ENCODE measurements at regions of chr11 and their contacts with region 1.

Region 1: GRCh38 chr11:14907411-14908213 is 15.6 kb upstream of the CYP2R1 start:
- DNase-seq: peak; percentile 89
- ATAC-seq: peak; percentile 68
- H3K4me3 Mint-ChIP-seq: no peak overlapping the region
- H3K27ac Mint-ChIP-seq: no peak overlapping the region
- H3K4me1 Mint-ChIP-seq: peaks cover 54% of the 10 kb centered on the region
- H3K27me3 Mint-ChIP-seq: no peaks in the 10 kb centered on the region

Region 2: GRCh38 chr11:14258221-14258935 is 649.2 kb before region 1 on chr11:
- CTCF ChIA-PET with region 1: no interaction called
- POLR2A ChIA-PET with region 1: no interaction called
- DNase-seq: no peak
- ATAC-seq: no peak
- H3K4me3 Mint-ChIP-seq: no peak overlapping the region
- H3K27ac Mint-ChIP-seq: no peak overlapping the region
- H3K4me1 Mint-ChIP-seq: no peaks in the 10 kb centered on the region
- H3K27me3 Mint-ChIP-seq: no peaks in the 10 kb centered on the region

Region 3: DNA sequence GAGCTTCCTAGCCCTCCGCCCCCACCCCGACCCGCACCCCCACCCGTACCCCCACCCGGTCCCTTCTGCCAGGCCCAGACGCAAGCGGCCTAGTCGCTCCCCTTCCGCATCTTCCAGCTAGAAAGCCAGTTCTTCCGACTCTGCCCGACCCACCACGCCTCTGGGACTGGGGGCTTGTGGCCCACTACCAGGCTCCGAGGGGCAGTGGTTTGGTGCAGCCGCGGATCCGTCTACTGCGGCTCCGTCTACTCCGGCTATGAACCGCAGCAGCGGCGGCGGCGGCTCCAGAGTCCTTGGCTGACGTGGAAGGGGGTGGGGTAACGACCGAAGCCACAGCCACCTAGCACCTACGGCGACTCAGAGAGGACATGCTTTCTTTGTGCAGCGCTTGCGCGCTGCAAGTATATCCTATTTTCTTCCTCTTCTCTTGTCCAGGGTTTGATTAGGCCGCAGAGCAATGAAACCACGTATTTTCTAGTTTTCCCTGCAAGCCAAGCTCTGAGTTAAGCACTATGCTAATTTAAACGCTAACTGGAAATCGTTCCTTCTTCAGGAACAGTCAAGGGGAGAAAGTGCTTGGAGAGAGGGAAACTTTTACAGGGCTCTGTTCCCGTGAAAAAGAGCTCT is 407.9 kb before region 1 on chr11 and contains the start of gene COPB1:
- CTCF ChIA-PET with region 1: interaction called, 21 read pairs
- POLR2A ChIA-PET with region 1: interaction called, 5 read pairs
- DNase-seq: peak; percentile 96
- ATAC-seq: peak; percentile 93
- H3K4me3 Mint-ChIP-seq: peak within 1 kb of the TSS; percentile 99
- H3K27ac Mint-ChIP-seq: peak within 1 kb of the TSS; percentile 96
- H3K4me1 Mint-ChIP-seq: peaks cover 47% of the 10 kb centered on the region
- H3K27me3 Mint-ChIP-seq: no peaks in the 10 kb centered on the region
- total RNA-seq, gene COPB1: 77.8 to 79.1 TPM

Region 4: DNA sequence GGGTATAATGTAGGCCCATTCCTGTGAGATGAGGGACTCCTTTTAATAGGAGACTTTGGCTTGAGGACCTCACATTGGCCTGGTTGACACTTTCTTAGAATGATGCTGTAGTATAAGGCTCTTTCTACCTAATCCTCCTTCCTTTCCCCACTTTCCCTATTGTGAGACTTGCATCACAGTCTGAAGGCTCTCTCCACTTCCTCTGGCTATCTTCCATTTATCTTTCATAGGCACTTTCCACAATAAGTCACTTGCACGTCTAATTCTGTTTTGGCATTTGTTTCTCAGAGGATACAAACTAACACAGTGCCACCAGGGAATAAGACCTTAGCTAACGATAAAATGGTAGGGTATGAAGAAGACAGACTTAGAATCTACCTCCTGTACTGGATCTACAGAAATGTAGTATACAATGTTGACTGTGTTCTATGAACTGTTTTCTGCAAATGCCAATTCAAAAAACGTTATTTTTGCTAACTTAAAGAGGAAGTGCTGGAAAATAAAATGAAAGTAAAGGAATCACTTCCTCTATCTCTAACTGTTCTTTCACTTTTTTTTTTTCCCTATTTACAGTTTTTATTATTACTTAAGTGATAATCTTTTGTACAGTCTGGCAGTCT is 281.9 kb before region 1 on chr11:
- CTCF ChIA-PET with region 1: interaction called, 31 read pairs
- POLR2A ChIA-PET with region 1: no interaction called
- DNase-seq: no peak
- ATAC-seq: no peak
- H3K4me3 Mint-ChIP-seq: no peak overlapping the region
- H3K27ac Mint-ChIP-seq: peak overlapping the region; percentile 21
- H3K4me1 Mint-ChIP-seq: peaks cover 43% of the 10 kb centered on the region
- H3K27me3 Mint-ChIP-seq: no peaks in the 10 kb centered on the region

Region 5: GRCh38 chr11:14764579-14765527 is 142.8 kb before region 1 on chr11:
- CTCF ChIA-PET with region 1: interaction called, 41 read pairs
- POLR2A ChIA-PET with region 1: no interaction called
- DNase-seq: peak; percentile 77
- ATAC-seq: peak; percentile 79
- H3K4me3 Mint-ChIP-seq: no peak overlapping the region
- H3K27ac Mint-ChIP-seq: no peak overlapping the region
- H3K4me1 Mint-ChIP-seq: peaks cover 46% of the 10 kb centered on the region
- H3K27me3 Mint-ChIP-seq: no peaks in the 10 kb centered on the region

Region 6: DNA sequence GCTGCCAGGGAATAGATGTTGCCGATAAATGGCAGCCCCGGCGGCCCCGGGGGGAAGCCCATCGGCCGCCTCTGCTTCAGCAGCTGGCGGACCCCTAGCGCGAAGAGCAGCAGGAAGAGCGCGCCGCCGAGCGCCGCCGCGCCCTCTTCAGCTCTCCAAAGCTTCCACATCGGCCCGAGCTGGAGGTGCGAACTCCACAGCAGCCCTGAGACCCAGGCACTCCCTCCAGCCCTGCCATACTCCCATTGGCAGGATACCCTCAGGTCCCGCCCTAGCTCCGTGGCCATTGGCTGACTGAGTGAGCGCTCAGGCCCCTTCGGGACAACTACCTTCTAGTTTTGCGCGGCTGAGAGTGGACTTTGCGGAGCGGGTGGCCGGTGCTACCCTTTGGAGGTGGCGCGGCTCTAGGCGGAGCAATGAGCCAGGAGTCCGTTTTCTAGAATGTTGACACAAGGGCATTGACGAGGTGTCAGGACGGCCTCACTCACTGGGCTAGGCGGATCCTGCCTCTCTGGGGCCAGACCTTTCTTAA is 15.5 kb before region 1 on chr11 and contains the start of gene CYP2R1:
- CTCF ChIA-PET with region 1: interaction called, 111 read pairs
- POLR2A ChIA-PET with region 1: interaction called, 10 read pairs
- DNase-seq: peak; percentile 95
- ATAC-seq: peak; percentile 95
- H3K4me3 Mint-ChIP-seq: peak within 1 kb of the TSS; percentile 82
- H3K27ac Mint-ChIP-seq: peak within 1 kb of the TSS; percentile 90
- H3K4me1 Mint-ChIP-seq: peaks cover 55% of the 10 kb centered on the region
- H3K27me3 Mint-ChIP-seq: no peaks in the 10 kb centered on the region
- total RNA-seq, gene CYP2R1: 14.4 to 18.8 TPM

Region 7: GRCh38 chr11:15006139-15006759 is 98.6 kb after region 1 on chr11:
- CTCF ChIA-PET with region 1: interaction called, 172 read pairs
- POLR2A ChIA-PET with region 1: no interaction called
- DNase-seq: no peak
- ATAC-seq: peak; percentile 65
- H3K4me3 Mint-ChIP-seq: no peak overlapping the region
- H3K27ac Mint-ChIP-seq: no peak overlapping the region
- H3K4me1 Mint-ChIP-seq: no peaks in the 10 kb centered on the region
- H3K27me3 Mint-ChIP-seq: peaks cover 35% of the 10 kb centered on the region

Region 8: DNA sequence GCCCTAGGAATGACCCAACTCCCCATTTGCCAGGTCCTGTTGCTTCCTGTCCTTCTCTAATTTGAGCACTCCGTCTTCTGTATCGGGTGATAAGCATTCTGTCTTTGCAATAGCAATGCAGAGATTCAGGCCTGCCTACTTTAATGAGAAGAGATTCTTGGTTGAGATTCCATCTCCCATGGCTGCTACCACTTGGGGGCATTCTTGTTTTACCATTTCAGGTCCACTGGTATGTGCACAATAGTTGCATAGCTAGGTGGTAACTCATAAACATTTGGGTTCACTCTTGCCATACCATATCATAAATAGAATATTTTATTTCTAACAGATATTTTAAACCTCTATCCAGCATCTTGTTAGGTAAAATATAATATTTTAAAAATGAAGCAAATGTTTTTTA is 131.4 kb after region 1 on chr11:
- CTCF ChIA-PET with region 1: no interaction called
- POLR2A ChIA-PET with region 1: no interaction called
- DNase-seq: no peak
- ATAC-seq: no peak
- H3K4me3 Mint-ChIP-seq: no peak overlapping the region
- H3K27ac Mint-ChIP-seq: no peak overlapping the region
- H3K4me1 Mint-ChIP-seq: no peaks in the 10 kb centered on the region
- H3K27me3 Mint-ChIP-seq: peaks cover 20% of the 10 kb centered on the region

Region 9: GRCh38 chr11:15101072-15101709 is 193.6 kb after region 1 on chr11:
- CTCF ChIA-PET with region 1: interaction called, 38 read pairs
- POLR2A ChIA-PET with region 1: no interaction called
- DNase-seq: peak; percentile 67
- ATAC-seq: peak; percentile 78
- H3K4me3 Mint-ChIP-seq: no peak overlapping the region
- H3K27ac Mint-ChIP-seq: no peak overlapping the region
- H3K4me1 Mint-ChIP-seq: no peaks in the 10 kb centered on the region
- H3K27me3 Mint-ChIP-seq: peaks cover 27% of the 10 kb centered on the region

Region 10: DNA sequence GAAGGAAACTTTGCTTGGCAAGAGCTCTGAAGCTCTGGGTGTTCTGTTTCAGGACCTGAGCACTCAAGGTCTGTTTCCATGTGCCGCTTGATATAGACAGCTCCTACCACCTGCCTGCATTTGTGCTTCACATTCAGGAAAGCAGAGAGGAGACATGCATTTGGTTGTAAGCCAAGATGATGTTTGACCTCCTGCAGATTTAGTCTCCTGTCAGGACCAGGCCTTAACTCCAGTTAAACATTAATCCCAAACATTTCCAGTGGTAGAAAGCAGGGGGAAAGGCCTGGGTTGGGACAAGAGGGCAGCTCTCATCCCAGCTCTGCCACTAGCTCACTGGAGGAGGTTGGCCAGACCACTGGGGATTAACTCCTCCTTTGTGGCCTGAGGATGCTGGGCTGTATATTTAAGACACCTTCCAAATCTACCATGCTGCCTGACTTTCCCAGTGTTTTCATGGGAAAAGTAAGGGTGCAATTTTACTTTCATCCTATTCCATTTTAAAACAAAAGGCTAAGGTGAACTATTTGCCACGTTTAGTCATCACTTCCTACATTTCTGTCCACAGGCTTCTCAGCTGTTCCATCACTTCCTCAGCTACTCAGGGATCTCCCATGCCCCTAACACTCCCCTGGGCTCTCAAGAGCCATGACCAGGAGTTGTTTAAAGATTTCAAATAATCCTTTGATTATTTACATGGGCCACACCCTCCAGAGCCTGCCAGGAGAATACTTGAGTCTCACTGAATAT is 288.0 kb after region 1 on chr11:
- CTCF ChIA-PET with region 1: no interaction called
- POLR2A ChIA-PET with region 1: no interaction called
- DNase-seq: no peak
- ATAC-seq: no peak
- H3K4me3 Mint-ChIP-seq: no peak overlapping the region
- H3K27ac Mint-ChIP-seq: no peak overlapping the region
- H3K4me1 Mint-ChIP-seq: no peaks in the 10 kb centered on the region
- H3K27me3 Mint-ChIP-seq: peaks cover 4% of the 10 kb centered on the region

Region 11: DNA sequence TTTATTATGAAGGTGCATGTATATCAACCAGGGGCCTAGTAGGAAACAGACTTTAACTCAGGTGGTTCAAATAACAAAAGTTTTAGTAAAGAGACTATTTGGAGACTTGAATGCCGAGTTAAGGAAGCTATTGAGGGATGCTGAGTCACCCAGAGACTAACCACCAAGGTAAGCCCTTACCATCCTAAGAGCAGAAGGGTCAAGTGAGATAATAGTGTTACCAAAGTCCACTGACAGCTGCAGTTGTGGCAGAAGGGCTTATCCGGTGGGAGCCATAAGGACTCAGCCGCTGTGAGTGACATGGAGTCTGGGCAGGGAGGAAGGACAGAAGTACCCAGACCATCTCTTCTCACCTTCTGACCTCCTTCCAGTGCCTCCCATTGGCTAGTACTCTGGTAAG is 341.1 kb after region 1 on chr11:
- CTCF ChIA-PET with region 1: no interaction called
- POLR2A ChIA-PET with region 1: no interaction called
- DNase-seq: no peak
- ATAC-seq: no peak
- H3K4me3 Mint-ChIP-seq: no peak overlapping the region
- H3K27ac Mint-ChIP-seq: no peak overlapping the region
- H3K4me1 Mint-ChIP-seq: no peaks in the 10 kb centered on the region
- H3K27me3 Mint-ChIP-seq: peaks cover 10% of the 10 kb centered on the region

Measured in activated CD8-positive, alpha-beta T cell treated with anti-CD3 and anti-CD28 coated beads, Interleukin-2, amount 10 ng/mL, durations not matched to agents 7 days and 5 days (primary cell).